ENCODE measurements at regions of chr18 and their contacts with region 1.

Region 1: DNA sequence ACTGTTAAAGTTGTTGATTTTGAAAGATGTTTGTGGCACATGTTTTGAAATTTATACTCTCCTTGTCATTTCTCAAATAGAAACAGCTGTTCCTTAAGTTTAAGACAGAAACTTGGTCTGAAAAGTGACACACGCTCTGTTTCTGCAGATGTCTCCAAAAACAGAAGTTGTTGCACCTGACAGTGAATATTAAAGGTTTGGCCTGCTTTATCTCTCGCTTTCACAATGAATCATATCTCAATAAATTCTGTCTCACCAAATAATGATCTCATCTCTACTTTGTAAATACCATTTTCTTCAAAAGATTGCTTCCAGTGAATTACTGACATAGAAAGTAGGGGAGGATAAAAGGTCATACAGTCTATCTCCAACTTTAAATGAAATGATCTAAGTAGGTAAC is 294.9 kb upstream of the SYT4 start:
- DNase-seq: no peak
- H3K4me3 ChIP-seq: no peak overlapping the region
- H3K27ac ChIP-seq: no peak overlapping the region
- H3K4me1 ChIP-seq: peaks cover 0 to 17% (median 3%) of the 10 kb centered on the region in 4 donors
- H3K27me3 ChIP-seq: no peaks in the 10 kb centered on the region
- CTCF ChIP-seq: no peak
- EP300 ChIP-seq: no peak
- POLR2A ChIP-seq: no peak

Region 2: GRCh38 chr18:43587538-43588153 is 15.5 kb after region 1 on chr18:
- intact Hi-C with region 1: loop called (anchors 2 kb)
- DNase-seq: no peak
- H3K4me3 ChIP-seq: no peak overlapping the region
- H3K27ac ChIP-seq: no peak overlapping the region
- H3K4me1 ChIP-seq: no peaks in the 10 kb centered on the region
- H3K27me3 ChIP-seq: no peaks in the 10 kb centered on the region
- CTCF ChIP-seq: peak; percentile 66 to 81 (median 80)
- EP300 ChIP-seq: no peak
- POLR2A ChIP-seq: no peak